ENCODE measurements at regions of chr7 and their contacts with region 1.

Region 1: GRCh38 chr7:129163875-129164544 is 19.5 kb downstream of the TSPAN33 start:
- DNase-seq: peak in 3 of 9 experiments; percentile 18 to 69 (median 61)
- ATAC-seq: peak; percentile 54
- H3K4me3 ChIP-seq: no peak overlapping the region
- H3K4me3 Mint-ChIP-seq: no peak overlapping the region
- H3K27ac ChIP-seq: no peak overlapping the region
- H3K27ac Mint-ChIP-seq: no peak overlapping the region
- H3K4me1 ChIP-seq: peaks cover 4% of the 10 kb centered on the region
- H3K4me1 Mint-ChIP-seq: peaks cover 7% of the 10 kb centered on the region
- H3K27me3 ChIP-seq: no peaks in the 10 kb centered on the region
- H3K27me3 Mint-ChIP-seq: no peaks in the 10 kb centered on the region
- CTCF ChIP-seq: peak; percentile 86

Region 2: DNA sequence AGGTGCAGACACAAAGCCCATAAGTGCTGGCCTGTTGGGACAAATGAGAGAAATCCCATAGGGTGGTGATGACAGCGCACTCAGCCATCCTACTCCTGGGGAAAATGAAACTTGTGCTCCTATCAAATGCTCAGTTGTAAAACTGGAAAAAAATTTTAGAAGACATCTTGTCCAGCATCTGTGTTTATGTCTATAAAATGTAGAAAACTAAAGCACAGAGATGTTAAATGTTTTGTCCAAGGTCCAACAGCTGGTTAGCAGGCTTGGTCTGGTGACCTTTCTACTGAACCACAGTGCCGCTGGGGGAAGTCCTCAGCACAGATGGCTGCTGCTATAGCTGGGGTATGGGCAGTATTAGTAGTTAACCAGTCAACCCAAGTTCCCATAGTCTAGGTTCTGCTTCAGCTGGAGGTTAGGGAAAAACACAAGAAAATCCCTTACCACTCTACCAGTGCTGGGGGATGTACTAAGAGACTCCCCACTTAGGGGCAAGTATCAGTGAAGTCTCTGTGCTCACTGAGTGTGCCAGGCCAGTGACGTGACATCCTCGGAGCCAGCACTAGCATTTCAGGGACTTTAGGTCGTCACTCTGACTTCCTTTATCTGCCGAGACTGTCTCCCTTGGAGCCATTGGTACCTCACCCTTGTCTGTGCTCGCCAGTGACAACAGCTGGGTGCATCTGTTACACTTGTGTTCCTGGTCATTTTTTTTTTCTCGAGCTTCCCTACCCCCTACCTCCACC is 17.6 kb before region 1 on chr7:
- CTCF ChIA-PET with region 1: interaction called, 20 read pairs
- POLR2A ChIA-PET with region 1: interaction called, 3 read pairs
- intact Hi-C with region 1: no loop called
- DNase-seq: no peak
- ATAC-seq: no peak
- H3K4me3 ChIP-seq: no peak overlapping the region
- H3K4me3 Mint-ChIP-seq: peak overlapping the region; percentile 87
- H3K27ac ChIP-seq: no peak overlapping the region
- H3K27ac Mint-ChIP-seq: no peak overlapping the region
- H3K4me1 ChIP-seq: peaks cover 16% of the 10 kb centered on the region
- H3K4me1 Mint-ChIP-seq: peaks cover 23% of the 10 kb centered on the region
- H3K27me3 ChIP-seq: peaks cover 0 to 4% of the 10 kb centered on the region in 2 experiments
- H3K27me3 Mint-ChIP-seq: peaks cover 9% of the 10 kb centered on the region
- CTCF ChIP-seq: no peak

Region 3: GRCh38 chr7:129247087-129247486 is 83.1 kb after region 1 on chr7:
- CTCF ChIA-PET with region 1: no interaction called
- POLR2A ChIA-PET with region 1: no interaction called
- intact Hi-C with region 1: no loop called
- DNase-seq: no peak
- ATAC-seq: no peak
- H3K4me3 ChIP-seq: no peak overlapping the region
- H3K4me3 Mint-ChIP-seq: no peak overlapping the region
- H3K27ac ChIP-seq: no peak overlapping the region
- H3K27ac Mint-ChIP-seq: no peak overlapping the region
- H3K4me1 ChIP-seq: peaks cover 2% of the 10 kb centered on the region
- H3K4me1 Mint-ChIP-seq: peaks cover 12% of the 10 kb centered on the region
- H3K27me3 ChIP-seq: no peaks in the 10 kb centered on the region
- H3K27me3 Mint-ChIP-seq: no peaks in the 10 kb centered on the region
- CTCF ChIP-seq: no peak